ENCODE measurements at regions of chr12 and their contacts with region 1.

Region 1: DNA sequence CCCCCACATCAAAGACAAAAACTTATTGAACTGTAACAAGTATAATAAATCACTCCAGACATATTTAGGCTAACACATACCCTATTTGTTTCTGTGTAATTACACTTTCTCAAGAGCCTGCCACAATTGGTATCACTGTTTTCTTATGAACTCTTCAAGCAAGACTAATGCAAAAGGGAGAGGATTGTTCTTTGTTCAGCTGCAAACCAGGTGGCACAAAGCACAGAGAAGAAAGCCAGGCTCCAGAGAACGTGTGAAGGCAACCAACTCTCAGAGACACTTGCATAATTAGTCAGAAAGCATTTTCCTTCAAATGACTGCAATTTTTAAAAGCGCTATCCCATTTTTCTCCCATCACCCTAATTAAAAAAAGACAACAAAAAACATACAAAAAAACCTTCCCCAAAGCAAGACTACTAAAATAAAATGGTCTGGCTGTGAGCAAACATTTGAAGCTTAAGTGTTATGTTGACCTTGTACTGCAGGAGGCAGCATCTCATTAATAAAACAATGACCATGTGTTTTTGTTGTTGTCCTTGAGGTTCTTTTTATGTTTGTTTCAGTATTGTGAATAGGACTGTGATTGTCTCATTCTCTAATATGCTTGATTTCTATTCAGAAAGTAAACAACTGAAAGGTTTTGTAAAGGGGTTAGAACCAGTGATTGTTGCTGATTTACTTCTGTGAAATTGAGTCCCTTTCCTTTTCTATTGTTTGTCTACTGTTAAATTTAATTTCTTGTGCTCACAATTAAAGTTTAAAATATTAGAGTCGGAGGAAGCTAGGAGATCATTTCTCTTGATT is 452.7 kb upstream of the PDE3A start:
- DNase-seq: no peak

Region 2: DNA sequence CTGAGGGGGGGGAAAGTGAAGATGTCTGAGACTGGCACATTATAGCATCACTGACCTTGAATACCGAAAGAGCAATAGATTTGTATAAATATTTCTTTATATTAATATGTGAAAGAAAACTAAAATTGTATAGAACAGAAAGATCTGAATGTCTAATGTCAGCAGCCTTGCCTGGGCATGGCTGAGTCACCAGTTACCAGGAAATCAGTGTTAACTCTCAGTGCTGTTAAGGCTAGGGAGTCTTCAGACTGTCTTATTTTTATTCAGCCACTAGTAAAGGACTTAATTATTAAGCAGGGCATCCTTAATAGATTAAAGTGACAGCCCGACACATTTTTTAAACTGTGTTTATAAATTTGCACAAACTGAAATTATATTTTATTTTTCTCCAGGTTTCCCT is 599.2 kb before region 1 on chr12:
- intact Hi-C with region 1: no loop called
- DNase-seq: no peak

Region 3: GRCh38 chr12:20000229-20000869 is 84.8 kb after region 1 on chr12:
- intact Hi-C with region 1: loop called (anchors 5 kb)
- DNase-seq: no peak

Region 4: GRCh38 chr12:20212658-20213555 is 297.3 kb after region 1 on chr12:
- intact Hi-C with region 1: loop called (anchors 10 kb)
- DNase-seq: peak; percentile 89

Region 5: DNA sequence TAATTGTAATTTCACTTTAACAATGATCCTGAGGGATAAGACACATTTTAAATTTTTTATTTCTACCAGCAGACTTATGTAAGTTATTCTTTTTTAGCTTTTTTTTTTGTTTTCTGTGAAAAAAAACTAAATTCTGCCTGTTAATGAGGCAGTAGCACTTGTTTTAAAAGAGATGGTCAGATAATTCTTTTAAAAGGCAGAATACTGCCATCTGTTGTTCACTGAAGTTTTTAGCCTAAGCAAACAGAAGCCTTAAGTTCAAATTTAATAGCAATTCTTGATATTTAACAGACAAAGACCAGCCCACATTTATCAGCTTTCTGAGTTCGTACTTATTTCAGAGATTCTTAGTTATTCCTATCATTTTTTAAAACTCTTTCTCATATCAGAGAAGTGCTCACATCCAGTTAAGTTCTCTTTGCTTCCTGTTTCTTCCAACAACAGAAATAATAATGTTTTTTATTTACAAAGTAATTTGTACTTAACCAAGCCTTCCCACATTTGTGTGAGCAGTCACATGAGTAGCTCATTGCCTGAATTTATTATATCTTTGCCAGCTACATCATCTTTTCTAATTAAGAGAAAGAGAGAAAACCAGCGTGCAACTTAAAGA is 686.2 kb after region 1 on chr12:
- intact Hi-C with region 1: loop called (anchors 10 kb)
- DNase-seq: no peak